Activated CD4-positive, alpha-beta T cell treated with anti-CD3 and anti-CD28 coated beads, Interleukin-2, amount 10 ng/mL, durations not matched to agents 24 days and 14 days (primary cell): ENCODE measurements at regions of chr11 and their contacts with region 1.

Region 1: DNA sequence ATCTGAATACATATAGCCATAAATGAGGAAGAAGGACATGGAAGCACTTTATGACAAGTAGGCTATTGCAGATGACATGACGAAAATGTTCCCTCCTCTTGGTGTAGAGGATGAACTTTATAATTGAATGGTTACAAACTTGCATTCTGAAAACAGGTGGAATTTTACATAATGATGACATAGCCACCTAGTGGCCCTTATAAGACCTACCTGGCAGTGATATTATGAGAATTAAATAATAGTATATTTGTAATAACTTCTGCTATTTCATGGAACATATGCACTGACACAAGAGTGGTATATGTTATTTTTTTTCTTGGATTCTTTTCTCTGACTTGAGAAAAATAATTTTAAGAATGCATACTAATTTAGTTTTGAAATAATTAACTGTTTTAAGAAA is 22.9 kb downstream of the TRIM22 start:
- DNase-seq: no peak
- H3K4me3 Mint-ChIP-seq: no peak overlapping the region
- H3K27ac Mint-ChIP-seq: peak overlapping the region; percentile 36
- H3K4me1 Mint-ChIP-seq: no peaks in the 10 kb centered on the region
- H3K27me3 Mint-ChIP-seq: no peaks in the 10 kb centered on the region

Region 2: DNA sequence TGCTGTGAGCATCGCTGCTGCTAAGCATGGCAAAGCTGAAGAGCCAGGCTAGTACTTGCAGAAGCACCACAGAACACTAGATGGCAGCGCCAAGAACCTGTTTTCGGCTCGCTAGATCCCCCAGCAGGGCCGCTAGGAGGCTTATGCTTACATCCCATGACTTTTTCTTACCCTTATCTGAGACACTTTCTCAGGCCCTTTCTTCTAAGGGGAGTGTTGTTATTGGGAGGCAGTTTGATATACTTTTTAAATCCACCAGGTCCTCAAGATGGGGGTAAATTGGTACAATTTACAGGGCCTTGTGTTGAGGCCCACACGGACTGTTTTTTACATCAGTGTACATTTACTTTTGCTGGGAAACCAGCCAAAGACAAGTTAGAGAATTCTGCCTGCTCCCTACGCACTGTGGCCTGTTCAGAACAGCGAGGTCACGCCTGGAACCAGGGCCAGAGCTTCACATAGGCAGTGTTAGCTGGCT is 112.1 kb before region 1 on chr11:
- intact Hi-C with region 1: loop called (anchors 1 kb)
- DNase-seq: peak; percentile 86
- H3K4me3 Mint-ChIP-seq: no peak overlapping the region
- H3K27ac Mint-ChIP-seq: no peak overlapping the region
- H3K4me1 Mint-ChIP-seq: peaks cover 10% of the 10 kb centered on the region
- H3K27me3 Mint-ChIP-seq: peaks cover 6% of the 10 kb centered on the region

Region 3: DNA sequence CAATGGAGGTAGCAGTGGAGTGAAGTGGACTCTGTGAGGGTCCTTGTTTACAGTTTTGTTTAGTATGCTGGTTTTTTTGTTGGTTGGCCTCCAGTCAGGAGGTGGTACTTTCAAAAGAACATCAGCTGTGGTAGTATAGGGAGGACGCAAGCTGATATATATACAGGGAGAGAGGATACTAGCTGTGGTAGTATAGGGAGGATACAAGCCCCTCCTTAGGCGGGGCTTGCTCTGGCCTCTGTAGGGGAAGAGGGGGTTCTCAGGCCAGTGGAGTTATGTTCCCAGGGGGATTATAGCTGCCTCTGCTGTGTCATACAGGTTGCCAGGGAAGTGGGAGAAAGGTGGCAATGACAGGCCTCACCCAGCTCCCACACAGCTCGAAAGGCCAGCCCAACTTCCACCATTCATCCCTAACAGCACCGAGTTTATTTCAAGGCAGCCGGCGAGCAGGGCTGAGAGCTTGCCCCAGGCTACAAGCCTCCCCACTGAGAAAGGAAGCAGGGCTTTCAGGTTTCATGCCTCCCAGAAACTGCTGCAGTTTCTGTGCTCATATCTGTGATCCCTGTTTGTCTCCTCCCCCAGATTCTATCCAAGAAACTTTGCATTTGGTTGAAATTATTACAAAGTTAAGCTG is 118.8 kb after region 1 on chr11:
- intact Hi-C with region 1: no loop called
- DNase-seq: no peak
- H3K4me3 Mint-ChIP-seq: no peak overlapping the region
- H3K27ac Mint-ChIP-seq: no peak overlapping the region
- H3K4me1 Mint-ChIP-seq: no peaks in the 10 kb centered on the region
- H3K27me3 Mint-ChIP-seq: peaks cover 12% of the 10 kb centered on the region